ENCODE measurements at regions of chr18 and their contacts with region 1.

Region 1: DNA sequence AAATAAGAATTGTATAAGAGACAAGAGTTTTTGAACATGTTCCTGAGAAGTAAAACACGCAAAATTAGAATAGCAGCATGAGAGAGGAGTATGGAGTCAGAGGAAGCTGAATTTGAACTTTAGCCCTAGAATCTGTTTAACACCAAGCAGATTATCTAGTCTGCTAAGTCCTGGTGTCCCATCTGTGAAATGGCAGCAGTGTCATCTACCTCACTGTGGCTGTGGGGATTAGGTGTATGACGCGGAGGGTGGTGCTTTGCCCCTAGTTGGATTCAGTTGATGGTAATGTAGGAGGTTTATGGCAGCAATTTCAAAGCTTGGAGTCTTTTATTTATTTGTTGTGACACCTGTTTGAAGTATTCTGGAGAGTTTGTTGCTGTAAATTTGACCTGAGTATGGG is 79.2 kb downstream of the ZNF532 start:
- DNase-seq: no peak
- H3K4me3 ChIP-seq: no peak overlapping the region
- H3K27ac ChIP-seq: peak overlapping the region; percentile 97
- H3K4me1 ChIP-seq: peaks cover 75% of the 10 kb centered on the region
- H3K27me3 ChIP-seq: no peaks in the 10 kb centered on the region
- CTCF ChIP-seq: no peak

Region 2: DNA sequence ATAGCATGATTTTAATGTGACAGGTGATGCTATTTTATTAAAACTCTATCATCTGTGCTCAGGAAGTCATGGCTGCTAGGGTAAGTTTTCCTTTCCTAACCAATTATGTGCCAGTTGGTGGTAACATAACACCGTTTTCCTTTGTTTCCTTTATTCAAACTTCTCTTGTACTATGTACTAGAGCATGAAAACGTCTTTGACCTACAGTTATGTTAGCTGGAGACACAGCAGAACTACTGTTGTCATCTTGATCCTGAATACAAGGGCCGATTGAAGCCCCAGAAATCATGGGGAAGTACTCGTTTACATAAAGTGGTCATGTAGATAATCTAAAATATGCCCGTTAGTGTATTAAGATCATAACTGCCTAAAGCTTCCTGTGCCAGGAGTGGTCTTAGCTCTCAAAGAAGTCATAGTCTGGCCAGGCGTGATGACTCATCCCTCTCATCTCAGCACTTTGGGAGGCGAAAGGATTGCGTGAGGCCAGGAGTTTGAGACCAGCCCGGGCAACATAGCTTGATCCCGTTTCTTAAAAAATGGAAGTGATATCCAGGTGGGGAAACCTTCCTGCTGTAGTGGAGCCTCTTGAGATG is 879.4 kb before region 1 on chr18:
- CTCF ChIA-PET with region 1: no interaction called
- POLR2A ChIA-PET with region 1: no interaction called
- intact Hi-C with region 1: no loop called
- DNase-seq: no peak
- H3K4me3 ChIP-seq: no peak overlapping the region
- H3K27ac ChIP-seq: no peak overlapping the region
- H3K4me1 ChIP-seq: no peaks in the 10 kb centered on the region
- H3K27me3 ChIP-seq: no peaks in the 10 kb centered on the region
- CTCF ChIP-seq: no peak

Region 3: GRCh38 chr18:58682429-58683069 is 261.3 kb before region 1 on chr18:
- CTCF ChIA-PET with region 1: no interaction called
- POLR2A ChIA-PET with region 1: no interaction called
- intact Hi-C with region 1: no loop called
- DNase-seq: peak; percentile 88
- H3K4me3 ChIP-seq: no peak overlapping the region
- H3K27ac ChIP-seq: peak overlapping the region; percentile 18
- H3K4me1 ChIP-seq: peaks cover 21% of the 10 kb centered on the region
- H3K27me3 ChIP-seq: no peaks in the 10 kb centered on the region
- CTCF ChIP-seq: no peak

Region 4: GRCh38 chr18:58887613-58887963 is 56.3 kb before region 1 on chr18:
- CTCF ChIA-PET with region 1: no interaction called
- POLR2A ChIA-PET with region 1: no interaction called
- intact Hi-C with region 1: no loop called
- DNase-seq: peak; percentile 78
- H3K4me3 ChIP-seq: peak overlapping the region; percentile 0
- H3K27ac ChIP-seq: peak overlapping the region; percentile 69
- H3K4me1 ChIP-seq: peaks cover 32% of the 10 kb centered on the region
- H3K27me3 ChIP-seq: no peaks in the 10 kb centered on the region
- CTCF ChIP-seq: no peak

Region 5: DNA sequence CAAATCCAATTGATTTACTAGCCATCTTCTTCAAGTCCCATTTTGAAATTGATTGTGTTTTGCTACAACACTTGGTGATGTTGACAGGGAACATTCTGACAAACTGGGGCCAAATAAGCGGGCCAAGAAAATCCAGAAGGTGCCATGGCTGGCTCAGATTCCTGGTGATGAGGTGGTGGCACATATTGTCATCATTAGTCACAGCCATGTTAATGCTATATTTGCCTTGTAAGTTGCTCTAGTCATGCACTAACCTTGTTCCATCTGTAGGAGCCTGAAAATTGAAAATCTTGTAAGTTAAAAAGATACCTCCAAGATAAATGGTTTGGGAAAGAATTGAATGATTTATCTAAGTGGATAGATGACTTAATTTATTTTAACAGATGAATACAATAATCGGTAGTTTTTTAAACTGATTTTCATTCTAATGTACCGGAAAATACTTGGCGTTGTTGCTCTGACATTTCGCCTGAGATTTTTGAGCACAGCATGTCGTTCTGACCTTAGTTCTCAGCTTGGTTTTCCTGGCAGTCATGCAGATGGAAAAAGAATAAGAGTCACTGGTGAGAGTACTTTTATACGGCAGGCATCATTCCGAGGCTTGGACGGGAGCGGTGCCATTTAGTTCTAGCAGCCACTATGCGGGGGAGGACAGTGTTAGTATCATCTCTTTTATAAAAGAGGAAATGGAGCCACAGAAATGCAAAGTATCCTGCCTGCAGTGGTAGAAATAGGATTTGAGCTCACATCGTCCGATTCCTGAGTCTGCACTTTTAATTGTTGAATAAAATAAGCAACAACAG is 54.7 kb after region 1 on chr18:
- CTCF ChIA-PET with region 1: interaction called, 4 read pairs
- POLR2A ChIA-PET with region 1: no interaction called
- intact Hi-C with region 1: loop called (anchors 5 kb)
- DNase-seq: peak; percentile 85
- H3K4me3 ChIP-seq: peak overlapping the region; percentile 18
- H3K27ac ChIP-seq: peak overlapping the region; percentile 79
- H3K4me1 ChIP-seq: peaks cover 59% of the 10 kb centered on the region
- H3K27me3 ChIP-seq: no peaks in the 10 kb centered on the region
- CTCF ChIP-seq: no peak

Region 6: GRCh38 chr18:59056706-59057492 is 113.0 kb after region 1 on chr18:
- CTCF ChIA-PET with region 1: interaction called, 5 read pairs
- POLR2A ChIA-PET with region 1: no interaction called
- intact Hi-C with region 1: loop called (anchors 2 kb)
- DNase-seq: peak; percentile 88
- H3K4me3 ChIP-seq: no peak overlapping the region
- H3K27ac ChIP-seq: peak overlapping the region; percentile 58
- H3K4me1 ChIP-seq: peaks cover 53% of the 10 kb centered on the region
- H3K27me3 ChIP-seq: no peaks in the 10 kb centered on the region
- CTCF ChIP-seq: peak; percentile 95